Heart right ventricle (tissue), 16 donors: ENCODE measurements at regions of chr7 and their contacts with region 1.

Region 1: GRCh38 chr7:87312215-87312865 is 33.1 kb upstream of the CROT start:
- DNase-seq: peak in 1 of 2 donors; percentile 41
- ATAC-seq: peak; percentile 42 to 79 (median 71)
- H3K4me3 ChIP-seq: no peak overlapping the region
- H3K27ac ChIP-seq: no peak overlapping the region
- H3K4me1 ChIP-seq: peaks cover 0 to 4% (median 0%) of the 10 kb centered on the region in 9 donors
- H3K27me3 ChIP-seq: peaks cover 0 to 5% (median 0%) of the 10 kb centered on the region in 7 donors
- CTCF ChIP-seq: peak; percentile 90 to 99 (median 98)

Region 2: GRCh38 chr7:87252166-87252565 is 60.2 kb before region 1 on chr7:
- intact Hi-C with region 1: no loop called
- DNase-seq: no peak
- ATAC-seq: no peak
- H3K4me3 ChIP-seq: no peak overlapping the region
- H3K27ac ChIP-seq: no peak overlapping the region
- H3K4me1 ChIP-seq: no peaks in the 10 kb centered on the region
- H3K27me3 ChIP-seq: no peaks in the 10 kb centered on the region
- CTCF ChIP-seq: no peak

Region 3: DNA sequence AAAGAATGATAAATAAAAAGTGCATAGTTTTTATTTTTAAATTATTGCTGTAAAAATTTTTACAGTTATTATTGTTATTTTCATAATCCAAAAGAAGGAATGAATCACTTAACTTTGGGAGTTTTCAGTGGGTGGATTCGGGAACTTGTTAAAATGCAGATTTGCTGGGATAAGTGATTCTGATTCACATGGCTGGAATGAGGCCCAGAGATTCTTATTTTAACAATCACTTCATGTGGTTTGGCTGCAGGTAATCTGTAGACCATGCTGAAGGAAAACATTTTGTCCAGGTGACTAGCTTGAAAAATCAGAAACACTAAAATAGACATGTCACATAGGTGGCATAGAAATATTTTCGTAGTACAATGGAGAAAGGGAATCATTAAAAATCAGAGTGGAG is 47.0 kb after region 1 on chr7:
- intact Hi-C with region 1: no loop called
- DNase-seq: no peak
- ATAC-seq: no peak
- H3K4me3 ChIP-seq: no peak overlapping the region
- H3K27ac ChIP-seq: no peak overlapping the region
- H3K4me1 ChIP-seq: no peaks in the 10 kb centered on the region
- H3K27me3 ChIP-seq: no peaks in the 10 kb centered on the region
- CTCF ChIP-seq: no peak

Region 4: GRCh38 chr7:87416682-87417587 is 104.6 kb after region 1 on chr7:
- intact Hi-C with region 1: loop called (anchors 1 to 2 kb)
- DNase-seq: peak in 1 of 2 donors; percentile 66
- ATAC-seq: peak in 6 of 8 donors; percentile 25 to 69 (median 51)
- H3K4me3 ChIP-seq: no peak overlapping the region
- H3K27ac ChIP-seq: no peak overlapping the region
- H3K4me1 ChIP-seq: no peaks in the 10 kb centered on the region
- H3K27me3 ChIP-seq: no peaks in the 10 kb centered on the region
- CTCF ChIP-seq: peak; percentile 43 to 80 (median 68)

Region 5: DNA sequence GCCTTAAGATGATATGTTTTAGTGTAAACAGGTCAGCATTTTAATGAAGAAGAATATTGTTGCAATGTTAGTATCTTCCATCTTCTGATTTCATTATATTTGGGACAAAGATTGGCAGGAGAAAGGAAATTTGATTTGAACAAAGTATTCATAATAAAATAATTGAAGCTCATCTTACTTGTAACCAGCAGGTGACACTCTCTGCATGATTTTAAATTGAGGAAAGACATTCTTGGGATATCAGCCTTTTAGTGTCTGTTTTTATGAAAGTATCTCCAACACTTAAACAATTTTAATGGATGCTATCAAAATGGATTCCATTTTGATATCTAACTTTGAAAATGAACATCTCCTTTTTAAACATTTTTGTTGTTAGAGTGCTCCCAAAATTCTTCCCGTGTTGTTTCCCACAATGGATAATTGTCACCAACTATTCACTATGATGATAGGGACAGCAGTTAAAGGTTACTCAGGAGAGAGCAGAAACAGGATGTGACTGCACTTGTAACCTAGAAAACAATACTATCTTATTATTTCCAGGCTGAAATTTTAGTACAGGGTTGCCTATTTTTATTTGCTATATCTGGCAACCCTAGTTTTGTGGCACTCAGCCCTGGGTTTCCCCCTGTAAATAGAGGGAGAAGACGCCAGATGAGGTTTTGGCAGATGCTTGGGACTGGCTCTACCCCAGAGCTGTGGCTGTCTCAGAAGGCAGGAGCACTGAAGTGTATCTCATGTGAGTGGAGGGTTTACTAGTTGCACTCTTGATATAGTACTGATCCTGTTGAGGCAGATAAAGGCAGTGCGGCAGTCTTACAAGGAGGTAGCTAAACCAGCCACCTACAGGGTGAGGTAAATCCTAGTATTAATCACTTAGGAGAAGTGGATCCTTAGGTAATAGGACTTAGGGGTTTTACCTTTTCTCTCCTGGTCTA is 194.2 kb after region 1 on chr7:
- intact Hi-C with region 1: loop called in 1 of 10 experiments (anchors 10 kb)
- DNase-seq: no peak
- ATAC-seq: peak in 1 of 8 donors; percentile 22
- H3K4me3 ChIP-seq: no peak overlapping the region
- H3K27ac ChIP-seq: no peak overlapping the region
- H3K4me1 ChIP-seq: peaks cover 0 to 9% (median 0%) of the 10 kb centered on the region in 9 donors
- H3K27me3 ChIP-seq: no peaks in the 10 kb centered on the region
- CTCF ChIP-seq: peak in 8 of 9 donors; percentile 23 to 67 (median 52)

Region 6: DNA sequence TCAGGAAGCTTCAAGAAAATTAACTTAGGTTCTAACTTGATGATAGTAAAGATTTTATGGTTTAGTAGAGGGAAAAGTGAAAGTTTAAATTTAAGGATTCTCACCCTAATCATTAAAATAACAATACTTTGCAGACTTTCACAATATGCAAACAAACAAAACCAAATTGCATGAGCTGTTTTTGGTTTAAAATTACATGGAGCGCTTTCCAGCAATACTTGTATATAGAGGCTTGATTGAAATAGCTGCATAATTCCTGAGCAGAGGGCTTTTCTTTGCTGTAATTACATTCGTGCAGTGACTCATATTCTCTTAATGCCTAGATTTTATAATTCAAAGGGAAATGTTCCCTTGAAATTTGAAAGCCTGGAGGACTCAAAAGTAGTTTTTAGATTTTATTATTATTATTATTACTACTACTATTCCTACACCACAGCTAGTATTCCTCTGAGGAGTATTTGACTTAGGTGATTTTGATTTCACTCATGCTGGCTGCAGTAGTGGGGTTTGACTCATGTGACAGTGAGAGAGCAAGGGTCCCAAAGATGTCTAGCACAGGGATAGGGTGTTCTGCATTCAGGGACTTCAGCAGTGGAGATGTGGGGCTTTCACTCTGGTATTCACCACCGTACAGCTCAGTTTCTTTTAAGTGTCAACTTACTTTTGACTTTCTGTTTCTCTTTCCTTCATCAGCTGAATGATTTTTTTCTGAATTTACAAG is 759.8 kb after region 1 on chr7:
- intact Hi-C with region 1: no loop called
- DNase-seq: no peak
- ATAC-seq: no peak
- H3K4me3 ChIP-seq: no peak overlapping the region
- H3K27ac ChIP-seq: no peak overlapping the region
- H3K4me1 ChIP-seq: no peaks in the 10 kb centered on the region
- H3K27me3 ChIP-seq: no peaks in the 10 kb centered on the region
- CTCF ChIP-seq: no peak